Ascending aorta (tissue), 2 donors: ENCODE measurements at regions of chr13 and their contacts with region 1.

Region 1: GRCh38 chr13:26985285-26985878 is 186.2 kb downstream of the USP12 start:
- DNase-seq: peak in 1 of 2 donors; percentile 88
- H3K4me3 ChIP-seq: no peak overlapping the region
- H3K27ac ChIP-seq: peak overlapping the region in 1 of 2 donors; percentile 69
- H3K4me1 ChIP-seq: peaks cover 5 to 19% of the 10 kb centered on the region in 2 donors
- H3K27me3 ChIP-seq: no peaks in the 10 kb centered on the region
- CTCF ChIP-seq: peak; percentile 74 to 86 (median 77)

Region 2: GRCh38 chr13:27171827-27172494 is 186.6 kb after region 1 on chr13:
- intact Hi-C with region 1: loop called (anchors 2 kb)
- DNase-seq: peak; percentile 66 to 97
- H3K4me3 ChIP-seq: peak overlapping the region; percentile 86 to 90
- H3K27ac ChIP-seq: peak overlapping the region; percentile 89 to 99
- H3K4me1 ChIP-seq: peaks cover 9 to 22% of the 10 kb centered on the region in 2 donors
- H3K27me3 ChIP-seq: no peaks in the 10 kb centered on the region
- CTCF ChIP-seq: peak in 1 of 3 experiments; percentile 22

Region 3: DNA sequence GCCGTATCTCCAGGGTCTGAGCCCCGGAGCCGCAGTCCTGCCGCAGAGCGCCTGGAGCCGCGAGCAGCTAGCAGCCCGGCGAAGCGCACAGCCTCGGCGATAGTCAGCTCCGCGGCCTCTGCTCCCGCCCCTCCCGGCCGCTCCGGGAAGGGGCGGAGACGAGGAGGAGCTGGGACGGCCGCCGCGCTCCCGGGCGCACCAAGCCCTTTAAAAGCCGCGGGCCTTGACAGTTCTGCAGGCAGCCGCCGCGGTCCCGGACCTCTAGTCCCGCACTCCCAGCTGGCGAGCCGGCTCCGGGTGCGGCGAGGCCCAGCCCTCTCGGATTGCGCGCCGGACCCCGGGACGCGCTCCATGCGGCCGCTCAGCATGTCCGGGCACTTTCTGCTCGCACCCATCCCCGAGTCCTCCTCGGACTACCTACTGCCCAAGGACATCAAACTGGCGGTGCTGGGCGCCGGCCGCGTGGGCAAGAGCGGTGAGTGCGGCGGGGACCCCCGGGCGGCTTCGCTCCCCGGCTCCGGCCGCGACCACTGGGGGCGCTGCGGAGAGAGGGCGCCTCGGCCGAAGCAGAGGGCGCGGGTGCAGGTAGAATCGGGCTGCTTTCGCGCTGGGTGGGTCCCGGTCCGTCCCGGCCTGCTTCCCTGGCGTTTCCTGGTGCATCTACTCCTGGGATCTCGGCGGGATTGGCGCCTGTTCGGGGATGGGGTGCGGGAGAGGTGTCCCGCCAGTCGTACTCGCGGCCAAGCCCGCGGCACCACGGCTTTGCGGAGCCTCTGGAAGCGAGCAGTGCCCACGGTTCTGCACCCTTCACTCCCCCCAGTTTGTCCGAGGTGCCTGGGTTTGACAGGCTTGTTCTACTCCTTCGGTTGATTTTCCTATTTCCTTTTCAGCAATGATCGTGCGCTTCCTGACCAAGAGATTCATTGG is 285.5 kb after region 1 on chr13 and contains the start of gene RASL11A:
- intact Hi-C with region 1: loop called (anchors 2 kb)
- DNase-seq: peak; percentile 44 to 95
- H3K4me3 ChIP-seq: peak within 1 kb of the TSS; percentile 67 to 84
- H3K27ac ChIP-seq: peak within 1 kb of the TSS; percentile 91 to 93
- H3K4me1 ChIP-seq: peaks cover 4 to 30% of the 10 kb centered on the region in 2 donors
- H3K27me3 ChIP-seq: no peaks in the 10 kb centered on the region
- CTCF ChIP-seq: peak; percentile 91 to 98 (median 94)
- total RNA-seq, gene RASL11A: 50.4 TPM

Region 4: DNA sequence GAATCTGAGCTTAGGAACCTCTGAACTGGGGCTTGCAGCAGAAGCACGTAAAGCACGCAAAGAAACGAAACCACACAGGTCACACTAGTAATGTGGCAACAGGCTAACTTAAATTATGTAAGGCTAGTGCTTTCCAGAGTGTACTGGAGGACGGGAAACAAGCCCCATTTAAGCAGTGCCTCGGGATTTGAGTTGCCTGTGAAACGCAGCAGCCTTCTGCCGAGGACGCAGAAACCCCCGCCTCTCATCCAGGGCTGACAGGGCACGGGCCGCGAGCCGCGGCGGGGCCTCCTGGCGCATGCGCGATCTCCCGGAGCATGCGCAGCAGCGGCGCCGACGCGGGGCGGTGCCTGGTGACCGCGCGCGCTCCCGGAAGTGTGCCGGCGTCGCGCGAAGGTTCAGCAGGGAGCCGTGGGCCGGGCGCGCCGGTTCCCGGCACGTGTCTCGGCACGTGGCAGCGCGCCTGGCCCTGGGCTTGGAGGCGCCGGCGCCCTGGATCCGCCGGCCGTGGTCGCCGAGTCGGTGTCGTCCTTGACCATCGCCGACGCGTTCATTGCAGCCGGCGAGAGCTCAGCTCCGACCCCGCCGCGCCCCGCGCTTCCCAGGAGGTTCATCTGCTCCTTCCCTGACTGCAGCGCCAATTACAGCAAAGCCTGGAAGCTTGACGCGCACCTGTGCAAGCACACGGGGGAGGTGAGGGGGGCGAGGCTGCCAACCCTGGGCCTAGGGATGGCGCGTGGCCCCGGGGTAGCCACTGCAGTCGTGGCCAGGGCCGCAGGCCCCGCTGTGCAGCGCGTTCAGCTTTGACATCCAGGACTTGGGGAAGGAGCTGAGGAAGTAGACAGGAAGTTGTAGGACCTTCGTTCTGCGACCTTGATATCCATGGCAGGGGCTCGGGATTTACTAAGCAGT is 439.1 kb after region 1 on chr13 and contains the start of gene GTF3A:
- intact Hi-C with region 1: loop called (anchors 2 kb)
- DNase-seq: peak; percentile 37 to 87
- H3K4me3 ChIP-seq: peak within 1 kb of the TSS; percentile 82 to 94
- H3K27ac ChIP-seq: peak within 1 kb of the TSS; percentile 84 to 87
- H3K4me1 ChIP-seq: peaks cover 9 to 22% of the 10 kb centered on the region in 2 donors
- H3K27me3 ChIP-seq: no peaks in the 10 kb centered on the region
- CTCF ChIP-seq: no peak
- total RNA-seq, gene GTF3A: 197 TPM

Region 5: DNA sequence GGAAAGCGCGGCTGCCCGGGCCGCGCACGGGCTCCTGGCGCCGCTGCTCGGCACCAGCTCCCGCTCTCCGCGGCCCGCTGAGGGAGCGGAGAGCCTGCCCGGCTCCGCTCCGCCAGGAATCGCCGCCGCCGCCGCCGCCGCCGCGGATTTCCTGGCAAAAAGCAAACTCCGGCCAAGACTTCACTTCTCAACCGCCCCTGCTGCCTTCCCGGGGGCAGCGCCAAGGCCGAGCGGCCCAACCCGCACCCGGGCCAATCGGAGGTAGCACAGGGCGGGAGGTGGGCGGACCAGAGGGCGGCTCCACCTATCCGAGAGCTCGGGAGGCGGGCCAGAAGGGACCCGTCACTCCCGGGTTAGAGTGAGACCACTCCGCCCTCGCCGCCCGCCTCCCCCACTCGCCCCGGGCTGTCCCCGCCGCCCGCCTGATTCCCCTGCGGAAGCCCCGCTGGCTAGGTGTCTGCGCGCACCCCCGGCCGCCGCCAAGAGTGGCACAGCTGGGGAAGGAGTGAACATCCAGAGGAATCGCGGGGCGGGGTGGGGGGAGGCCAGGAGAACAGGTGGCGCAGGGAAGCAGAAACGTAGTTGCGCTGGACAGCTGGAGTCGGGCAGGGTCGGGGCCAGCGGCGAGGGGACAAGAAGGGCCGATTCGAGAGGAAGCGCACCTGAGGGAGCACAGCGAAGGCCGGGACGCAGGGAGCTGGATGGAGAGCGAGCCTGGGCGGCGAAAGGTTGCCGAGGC is 635.2 kb after region 1 on chr13 and contains the start of gene LNX2:
- intact Hi-C with region 1: loop called (anchors 2 kb)
- DNase-seq: peak; percentile 95 to 99
- H3K4me3 ChIP-seq: peak within 1 kb of the TSS; percentile 72 to 95
- H3K27ac ChIP-seq: peak within 1 kb of the TSS; percentile 95 to 97
- H3K4me1 ChIP-seq: peaks cover 0 to 14% of the 10 kb centered on the region in 2 donors
- H3K27me3 ChIP-seq: no peaks in the 10 kb centered on the region
- CTCF ChIP-seq: no peak
- total RNA-seq, gene LNX2: 3.7 TPM

Region 6: DNA sequence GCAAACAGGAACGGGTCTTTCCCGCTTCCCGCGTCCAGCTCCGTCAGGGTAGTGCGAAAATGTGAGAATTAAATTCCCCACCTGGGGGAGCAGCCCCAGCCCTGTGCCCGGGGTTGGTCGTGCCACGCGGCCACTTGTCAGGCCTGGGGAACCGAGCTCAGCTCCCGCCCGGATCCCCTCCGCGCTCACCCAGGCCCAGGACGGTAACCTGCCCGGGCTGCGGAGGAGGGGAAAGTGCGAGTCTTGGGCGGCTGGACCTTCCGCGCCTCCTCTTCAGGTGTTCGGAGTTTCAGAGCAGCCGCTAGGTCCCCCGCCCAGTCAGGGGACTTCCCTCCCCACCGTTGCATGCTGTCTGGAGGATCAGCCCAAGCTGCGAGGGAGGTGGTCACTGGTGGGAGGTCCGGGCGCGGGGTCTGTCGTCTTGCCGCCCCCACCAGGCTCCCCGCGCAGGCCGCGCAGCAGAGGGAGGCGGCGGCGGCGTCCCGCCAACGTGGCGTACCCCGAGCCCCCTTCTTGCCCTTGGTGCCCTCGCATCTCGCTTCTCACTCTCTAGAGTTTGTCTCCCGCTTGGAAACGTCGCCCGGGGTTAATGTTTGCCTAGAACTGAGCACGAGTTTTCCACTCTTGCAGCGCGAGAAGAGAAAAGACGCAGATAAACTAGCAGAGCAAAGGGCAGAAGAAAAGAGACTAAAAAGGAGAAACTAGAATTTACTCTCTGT is 995.1 kb after region 1 on chr13:
- intact Hi-C with region 1: loop called (anchors 10 kb)
- DNase-seq: no peak
- H3K4me3 ChIP-seq: peak overlapping the region in 1 of 2 donors; percentile 17
- H3K27ac ChIP-seq: no peak overlapping the region
- H3K4me1 ChIP-seq: peaks cover 2 to 10% of the 10 kb centered on the region in 2 donors
- H3K27me3 ChIP-seq: peaks cover 13% of the 10 kb centered on the region
- CTCF ChIP-seq: no peak